Dorsolateral prefrontal cortex (tissue), 120 donors: ENCODE measurements at regions of chr1 and their contacts with region 1.

Region 1: DNA sequence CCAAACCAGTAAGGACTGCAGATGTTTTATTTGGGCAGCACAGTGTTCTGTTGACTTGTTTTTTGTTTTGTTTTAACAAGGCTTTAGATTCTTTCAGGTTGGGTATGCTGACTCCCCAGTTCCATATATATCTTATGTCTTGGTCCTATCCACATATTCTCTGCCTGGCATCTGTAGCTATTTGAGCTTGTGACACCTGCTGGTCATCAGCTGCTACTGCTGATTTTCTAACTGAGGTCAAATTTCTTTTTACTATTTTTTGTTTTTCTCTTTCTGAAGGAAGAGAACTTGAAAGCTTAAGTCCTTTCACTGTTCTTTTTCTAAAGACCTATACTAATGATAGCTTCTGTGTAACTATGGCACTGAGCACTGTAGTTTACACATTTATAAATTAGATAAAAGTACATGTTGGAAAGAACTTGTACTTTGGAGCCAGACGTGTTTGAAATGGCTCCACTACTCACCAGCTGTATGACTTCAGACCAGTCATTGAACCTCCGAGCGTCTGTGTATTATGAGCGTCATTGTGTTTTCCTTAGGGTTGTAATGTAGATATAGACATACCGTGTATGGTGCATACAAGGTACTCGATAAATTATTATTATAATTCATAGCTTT is 109.4 kb downstream of the NRDC start:
- DNase-seq: no peak
- H3K4me3 ChIP-seq: no peak overlapping the region
- H3K27ac ChIP-seq: peak overlapping the region in 21 of 59 donors; percentile 0 to 73 (median 38)
- H3K27me3 ChIP-seq: no peaks in the 10 kb centered on the region
- CTCF ChIP-seq: peak; percentile 73 to 96 (median 86)

Region 2: DNA sequence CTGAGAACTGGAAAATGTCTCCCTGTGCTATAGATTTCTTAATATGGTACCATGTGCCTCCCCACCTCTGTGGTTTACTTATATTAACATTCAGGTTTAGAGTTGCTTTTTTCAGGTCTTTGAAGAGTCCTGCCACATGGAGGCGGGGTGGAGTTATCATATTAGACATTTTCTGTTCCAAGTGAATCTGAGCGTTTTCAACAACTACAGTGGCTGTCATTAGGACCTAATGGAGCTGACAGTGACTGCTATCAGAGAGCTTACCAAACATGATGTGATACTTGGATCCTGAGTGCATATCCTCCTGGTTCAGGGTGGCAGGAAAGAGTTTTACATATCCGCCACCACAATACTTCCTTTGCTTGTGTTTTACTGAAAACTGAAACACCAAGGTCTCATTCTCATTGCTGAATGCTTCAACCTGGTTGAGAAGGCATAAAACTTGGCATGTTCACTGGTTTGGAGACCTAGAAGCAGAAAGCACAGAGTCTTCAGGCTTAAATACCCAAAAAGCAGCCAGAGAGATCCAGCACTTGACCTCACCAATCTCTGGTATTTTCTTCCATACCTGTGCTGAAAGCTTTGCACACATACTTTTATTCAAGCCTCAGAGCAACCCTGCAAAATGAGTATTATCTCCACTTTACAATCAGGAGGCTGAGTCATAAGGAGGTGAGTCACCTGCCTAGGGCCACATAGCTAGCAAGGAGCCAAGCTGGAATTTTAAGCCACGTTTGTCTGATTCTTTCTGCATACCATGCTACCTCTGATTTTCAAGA is 199.6 kb before region 1 on chr1:
- intact Hi-C with region 1: loop called in 1 of 2 experiments (anchors 5 kb)
- DNase-seq: no peak
- H3K4me3 ChIP-seq: no peak overlapping the region
- H3K27ac ChIP-seq: peak overlapping the region in 11 of 59 donors; percentile 2 to 59 (median 29)
- H3K27me3 ChIP-seq: no peaks in the 10 kb centered on the region
- CTCF ChIP-seq: peak in 33 of 56 donors; percentile 9 to 57 (median 30)

Region 3: DNA sequence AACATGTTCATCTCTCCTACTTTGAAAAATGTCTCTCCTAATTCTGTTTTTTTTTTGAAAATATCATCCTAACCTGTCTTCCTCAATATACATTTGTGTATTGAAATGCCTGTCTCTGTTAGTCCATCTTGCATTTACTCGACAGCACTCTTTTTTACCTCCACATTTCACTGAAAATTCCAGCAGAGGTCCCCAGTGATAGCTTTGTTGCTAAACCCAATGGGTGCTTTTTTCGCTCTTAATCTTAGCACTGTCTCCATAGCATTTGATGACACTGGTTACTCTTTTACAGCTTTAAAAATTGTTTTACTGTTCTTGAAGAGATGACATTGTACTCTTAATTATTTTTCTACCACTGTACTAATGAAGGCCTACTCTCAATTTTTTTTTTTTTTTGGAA is 141.4 kb before region 1 on chr1:
- intact Hi-C with region 1: loop called (anchors 5 to 10 kb)
- DNase-seq: no peak
- H3K4me3 ChIP-seq: no peak overlapping the region
- H3K27ac ChIP-seq: no peak overlapping the region
- H3K27me3 ChIP-seq: no peaks in the 10 kb centered on the region
- CTCF ChIP-seq: peak in 55 of 56 donors; percentile 20 to 66 (median 46)

Region 4: DNA sequence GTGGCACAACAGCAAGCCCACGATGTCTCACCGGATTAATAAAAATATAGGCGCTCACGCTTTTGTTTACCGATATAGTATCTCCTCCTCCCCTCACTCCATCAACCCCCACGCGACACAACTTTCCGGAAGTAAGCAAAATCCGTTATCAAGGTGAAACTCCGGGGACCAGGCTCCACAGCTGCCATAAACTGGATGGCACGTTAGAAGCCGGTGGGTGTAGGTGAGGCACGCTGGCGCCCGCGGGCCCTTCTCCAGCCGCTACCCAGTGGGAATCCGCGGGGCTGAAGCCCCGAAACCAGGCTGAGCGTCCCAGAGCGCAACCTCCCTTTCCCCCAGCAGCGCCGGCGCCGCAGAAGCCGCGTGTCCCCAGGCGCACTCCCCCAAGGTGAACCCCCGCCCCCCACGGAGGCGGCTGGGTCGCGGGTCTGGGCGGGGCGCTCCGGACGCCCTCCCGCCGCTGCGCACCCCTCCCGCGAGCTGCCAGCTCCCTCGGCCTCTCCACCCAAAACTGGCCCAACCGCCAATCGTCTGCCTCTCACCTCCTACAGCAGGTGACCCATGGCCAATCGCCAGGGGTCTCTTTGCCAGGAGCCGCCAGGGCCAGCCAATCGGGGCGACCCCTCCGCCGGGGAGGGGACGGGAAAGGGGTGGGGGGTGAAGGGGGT is 39.8 kb before region 1 on chr1:
- intact Hi-C with region 1: no loop called
- DNase-seq: peak in 9 of 10 donors; percentile 38 to 80 (median 59)
- H3K4me3 ChIP-seq: peak overlapping the region; percentile 43 to 84 (median 69)
- H3K27ac ChIP-seq: peak overlapping the region in 22 of 59 donors; percentile 7 to 82 (median 51)
- H3K27me3 ChIP-seq: no peaks in the 10 kb centered on the region
- CTCF ChIP-seq: no peak

Region 5: DNA sequence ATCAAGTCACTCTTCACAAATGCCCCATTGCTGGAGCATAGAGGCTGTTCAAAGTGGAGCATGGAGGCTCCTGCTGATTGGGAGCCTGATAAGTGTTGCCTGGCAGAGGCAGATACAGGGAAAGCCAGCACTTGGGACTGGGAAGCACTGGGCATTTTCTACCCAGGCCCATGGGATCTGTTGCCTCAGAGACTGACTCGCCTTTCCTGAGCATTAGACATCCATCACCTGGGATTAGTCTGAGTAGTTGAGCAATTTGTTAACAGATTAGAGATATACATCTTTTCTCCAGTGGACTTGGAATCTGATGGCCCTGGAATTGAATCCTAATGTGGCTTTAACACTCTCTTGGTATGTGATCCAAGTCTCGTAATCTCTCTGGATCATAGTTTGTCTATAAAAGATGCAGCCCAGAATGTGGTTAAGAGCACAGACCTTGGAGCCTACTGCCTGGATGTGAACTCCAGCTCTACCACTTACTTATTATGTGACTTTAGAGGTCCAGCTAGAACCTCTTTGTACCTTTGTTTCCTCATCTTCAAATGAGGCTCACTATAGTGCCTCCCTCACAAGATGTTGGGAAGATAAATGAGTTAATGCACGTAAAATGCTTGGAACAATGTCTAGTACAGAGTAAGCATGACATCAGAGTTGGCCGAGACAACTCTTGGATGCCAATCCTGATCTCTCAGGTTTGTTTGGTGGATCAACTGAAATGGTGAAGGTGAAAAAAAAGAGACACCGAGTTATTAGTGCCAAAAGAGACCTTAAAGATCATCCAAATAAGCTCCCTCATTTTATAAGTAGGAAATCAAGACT is 147.7 kb after region 1 on chr1:
- intact Hi-C with region 1: no loop called
- DNase-seq: no peak
- H3K4me3 ChIP-seq: no peak overlapping the region
- H3K27ac ChIP-seq: no peak overlapping the region
- H3K27me3 ChIP-seq: peaks cover 0 to 7% (median 0%) of the 10 kb centered on the region in 45 donors
- CTCF ChIP-seq: no peak